ENCODE measurements at regions of chr9 and their contacts with region 1.

Region 1: GRCh38 chr9:32968101-32969011 is 33.1 kb downstream of the APTX start:
- DNase-seq: peak; percentile 29
- ATAC-seq: no peak
- H3K4me3 ChIP-seq: no peak overlapping the region
- H3K27ac ChIP-seq: no peak overlapping the region
- H3K4me1 ChIP-seq: no peaks in the 10 kb centered on the region
- H3K27me3 ChIP-seq: no peaks in the 10 kb centered on the region
- CTCF ChIP-seq: peak; percentile 66
- EP300 ChIP-seq: no peak
- POLR2A ChIP-seq: no peak
- RAD21 ChIP-seq: peak; percentile 37; the same call in 1 of the 2 replicates

Region 2: DNA sequence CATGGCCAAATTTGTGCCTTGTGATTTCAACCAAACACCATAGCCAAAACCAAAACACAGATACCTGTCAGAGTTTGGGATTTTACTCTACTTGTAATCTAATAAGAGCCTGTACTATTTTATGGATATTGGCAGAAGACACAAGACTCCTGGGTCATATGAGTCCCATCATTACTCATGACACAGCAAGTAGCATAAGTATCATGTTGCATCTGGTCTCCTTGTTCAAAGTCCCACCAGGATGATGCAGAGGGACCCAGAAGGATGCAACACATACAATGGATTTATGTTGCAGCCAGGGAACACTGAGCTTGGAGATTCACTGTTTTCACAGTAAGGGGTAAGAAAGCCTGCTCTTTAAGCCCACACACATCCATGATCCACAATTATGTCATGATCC is 597.1 kb before region 1 on chr9:
- CTCF ChIA-PET with region 1: no interaction called
- POLR2A ChIA-PET with region 1: no interaction called
- in situ Hi-C with region 1: loop called (anchors 5 kb)
- intact Hi-C with region 1: no loop called
- DNase-seq: no peak
- ATAC-seq: no peak
- H3K4me3 ChIP-seq: no peak overlapping the region
- H3K27ac ChIP-seq: no peak overlapping the region
- H3K4me1 ChIP-seq: no peaks in the 10 kb centered on the region
- H3K27me3 ChIP-seq: no peaks in the 10 kb centered on the region
- CTCF ChIP-seq: no peak
- EP300 ChIP-seq: no peak
- POLR2A ChIP-seq: no peak
- RAD21 ChIP-seq: no peak

Region 3: GRCh38 chr9:32431940-32432555 is 536.3 kb before region 1 on chr9:
- CTCF ChIA-PET with region 1: no interaction called
- POLR2A ChIA-PET with region 1: no interaction called
- in situ Hi-C with region 1: no loop called
- intact Hi-C with region 1: loop called (anchors 10 kb)
- DNase-seq: peak; percentile 33
- ATAC-seq: peak; percentile 93
- H3K4me3 ChIP-seq: no peak overlapping the region
- H3K27ac ChIP-seq: no peak overlapping the region
- H3K4me1 ChIP-seq: peaks cover 12% of the 10 kb centered on the region
- H3K27me3 ChIP-seq: no peaks in the 10 kb centered on the region
- CTCF ChIP-seq: peak; percentile 72
- EP300 ChIP-seq: no peak
- POLR2A ChIP-seq: no peak
- RAD21 ChIP-seq: peak; percentile 57

Region 4: DNA sequence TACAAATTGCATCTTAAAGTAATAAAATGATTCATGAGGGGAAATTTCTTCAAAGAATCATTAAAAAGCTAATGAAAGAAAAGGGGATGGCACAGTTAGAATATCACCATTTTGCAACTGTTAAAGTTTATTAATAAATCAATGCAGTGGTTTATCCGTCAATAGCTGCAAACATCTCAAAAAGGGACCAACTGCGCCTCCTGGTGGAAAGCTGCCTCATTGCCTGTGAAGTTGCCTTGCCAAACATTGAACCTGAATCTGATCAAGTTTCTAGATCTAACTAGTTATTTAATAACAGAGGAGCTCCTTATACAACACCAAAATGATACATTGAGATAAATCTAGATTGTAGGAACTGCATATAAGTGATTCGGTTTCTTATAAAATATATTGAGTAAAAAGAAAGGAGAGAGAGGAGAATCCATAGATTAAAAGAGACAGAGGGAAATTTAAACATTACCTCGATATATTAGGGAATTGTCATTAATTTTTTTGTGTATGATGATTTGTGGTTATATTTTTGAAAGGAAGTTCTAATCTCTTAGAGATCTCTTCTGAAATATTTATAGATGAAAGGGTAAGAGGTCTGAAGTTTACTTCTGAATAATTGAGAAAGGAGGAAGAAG is 388.5 kb before region 1 on chr9:
- CTCF ChIA-PET with region 1: interaction called, 34 read pairs
- POLR2A ChIA-PET with region 1: no interaction called
- in situ Hi-C with region 1: loop called (anchors 5 kb)
- intact Hi-C with region 1: loop called (anchors 1 kb)
- DNase-seq: peak; percentile 38
- ATAC-seq: peak; percentile 51
- H3K4me3 ChIP-seq: no peak overlapping the region
- H3K27ac ChIP-seq: no peak overlapping the region
- H3K4me1 ChIP-seq: peaks cover 18% of the 10 kb centered on the region
- H3K27me3 ChIP-seq: no peaks in the 10 kb centered on the region
- CTCF ChIP-seq: peak; percentile 78
- EP300 ChIP-seq: no peak
- POLR2A ChIP-seq: no peak
- RAD21 ChIP-seq: peak; percentile 40

Region 5: DNA sequence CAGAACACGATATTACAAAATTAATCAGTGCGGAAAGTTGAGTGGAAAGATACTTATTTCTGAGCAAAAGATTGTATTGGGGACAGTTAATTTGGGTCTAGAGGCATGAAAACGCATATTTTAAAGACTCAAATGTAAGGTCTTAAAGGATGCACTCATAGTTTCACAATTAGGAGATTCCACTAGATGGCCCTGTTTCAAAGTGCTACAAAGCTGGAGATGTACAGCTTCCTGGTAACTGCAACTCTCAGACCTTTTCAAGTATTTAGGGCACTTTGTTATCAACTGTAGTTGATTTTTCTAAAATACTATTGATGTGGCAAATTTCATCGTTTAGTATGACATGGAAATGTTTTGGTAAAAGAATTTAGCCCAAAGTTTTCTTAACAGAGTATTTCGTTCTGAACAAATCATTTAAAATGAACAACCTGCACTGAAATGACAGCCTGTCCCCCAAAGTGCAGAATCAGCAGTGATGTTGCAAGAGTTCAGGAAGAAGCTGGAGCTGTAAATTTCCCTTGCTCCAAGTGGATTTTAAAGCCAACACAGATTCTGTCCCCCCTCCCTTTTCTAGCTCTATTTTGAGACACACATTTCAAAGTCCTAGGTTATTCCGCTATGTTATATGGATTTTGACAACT is 379.2 kb before region 1 on chr9:
- CTCF ChIA-PET with region 1: interaction called, 13 read pairs
- POLR2A ChIA-PET with region 1: no interaction called
- in situ Hi-C with region 1: loop called (anchors 5 kb)
- intact Hi-C with region 1: loop called (anchors 1 kb)
- DNase-seq: peak; percentile 28
- ATAC-seq: peak; percentile 87
- H3K4me3 ChIP-seq: no peak overlapping the region
- H3K27ac ChIP-seq: no peak overlapping the region
- H3K4me1 ChIP-seq: no peaks in the 10 kb centered on the region
- H3K27me3 ChIP-seq: no peaks in the 10 kb centered on the region
- CTCF ChIP-seq: peak; percentile 61
- EP300 ChIP-seq: no peak
- POLR2A ChIP-seq: no peak
- RAD21 ChIP-seq: peak; percentile 18; the same call in 1 of the 2 replicates

Measured in HepG2 (cell line).